GM13976 (cell line): ENCODE measurements at regions of chr4 and their contacts with region 1.

Region 1: GRCh38 chr4:15882675-15883086 is 55.9 kb downstream of the FGFBP1 start:
- DNase-seq: peak; percentile 62
- CTCF ChIP-seq: peak; percentile 75

Region 2: DNA sequence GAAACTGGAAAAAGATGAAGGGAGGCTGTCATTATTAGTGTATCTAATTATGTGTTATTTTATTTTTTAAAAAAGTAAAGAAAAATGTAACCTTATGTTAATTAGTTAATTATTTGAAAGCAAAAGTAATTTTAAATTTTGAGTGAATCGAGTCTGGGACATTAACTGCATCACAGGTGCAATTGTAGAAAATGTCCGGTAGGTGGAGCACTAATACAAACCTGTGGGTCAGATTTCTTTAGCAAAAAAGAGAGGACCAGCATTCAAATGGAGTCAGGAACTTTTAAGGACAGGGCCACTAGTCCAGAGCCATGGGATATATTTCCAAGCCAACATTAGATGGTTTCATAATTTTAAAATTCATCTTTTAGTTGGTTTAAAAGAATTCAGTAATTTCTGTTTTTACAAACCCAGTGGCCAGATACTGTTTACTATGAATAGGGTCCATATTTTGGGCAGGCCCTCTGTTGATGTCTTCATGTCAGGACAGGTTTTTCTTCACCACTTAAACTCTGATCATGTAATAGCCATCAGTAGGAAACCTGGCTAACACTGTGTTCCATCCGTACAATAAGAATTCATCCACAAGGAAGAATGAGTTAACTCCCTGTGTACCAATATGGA is 152.7 kb before region 1 on chr4:
- in situ Hi-C with region 1: loop called (anchors 25 kb)
- DNase-seq: peak; percentile 61
- CTCF ChIP-seq: peak; percentile 72

Region 3: GRCh38 chr4:15805583-15806517 is 76.8 kb before region 1 on chr4:
- in situ Hi-C with region 1: loop called (anchors 10 kb)
- DNase-seq: no peak
- CTCF ChIP-seq: peak; percentile 68

Region 4: GRCh38 chr4:15945516-15945915 is 62.8 kb after region 1 on chr4:
- in situ Hi-C with region 1: loop called (anchors 10 kb)
- DNase-seq: no peak
- CTCF ChIP-seq: no peak

Region 5: DNA sequence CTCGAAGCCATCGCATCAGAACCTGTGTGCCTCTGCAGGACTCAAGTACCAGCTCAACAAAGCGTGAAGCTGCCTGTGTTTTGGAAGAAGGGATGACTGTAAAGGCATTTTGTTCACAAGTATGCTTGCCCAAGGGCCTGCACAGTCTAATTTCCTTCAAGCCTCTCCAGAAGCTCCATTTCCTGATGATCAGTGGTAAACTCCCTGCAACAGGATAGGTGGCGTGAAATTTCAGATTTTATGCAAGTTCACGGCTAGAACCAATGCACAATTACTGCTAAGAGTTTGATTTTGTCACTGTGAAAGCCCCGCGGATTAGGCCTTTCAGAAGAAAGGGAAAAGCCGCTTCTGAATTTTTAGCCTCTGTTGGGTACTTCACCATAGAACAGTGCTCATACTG is 432.8 kb after region 1 on chr4:
- in situ Hi-C with region 1: no loop called
- DNase-seq: no peak
- CTCF ChIP-seq: no peak